ENCODE measurements at regions of chr19 and their contacts with region 1.

Region 1: DNA sequence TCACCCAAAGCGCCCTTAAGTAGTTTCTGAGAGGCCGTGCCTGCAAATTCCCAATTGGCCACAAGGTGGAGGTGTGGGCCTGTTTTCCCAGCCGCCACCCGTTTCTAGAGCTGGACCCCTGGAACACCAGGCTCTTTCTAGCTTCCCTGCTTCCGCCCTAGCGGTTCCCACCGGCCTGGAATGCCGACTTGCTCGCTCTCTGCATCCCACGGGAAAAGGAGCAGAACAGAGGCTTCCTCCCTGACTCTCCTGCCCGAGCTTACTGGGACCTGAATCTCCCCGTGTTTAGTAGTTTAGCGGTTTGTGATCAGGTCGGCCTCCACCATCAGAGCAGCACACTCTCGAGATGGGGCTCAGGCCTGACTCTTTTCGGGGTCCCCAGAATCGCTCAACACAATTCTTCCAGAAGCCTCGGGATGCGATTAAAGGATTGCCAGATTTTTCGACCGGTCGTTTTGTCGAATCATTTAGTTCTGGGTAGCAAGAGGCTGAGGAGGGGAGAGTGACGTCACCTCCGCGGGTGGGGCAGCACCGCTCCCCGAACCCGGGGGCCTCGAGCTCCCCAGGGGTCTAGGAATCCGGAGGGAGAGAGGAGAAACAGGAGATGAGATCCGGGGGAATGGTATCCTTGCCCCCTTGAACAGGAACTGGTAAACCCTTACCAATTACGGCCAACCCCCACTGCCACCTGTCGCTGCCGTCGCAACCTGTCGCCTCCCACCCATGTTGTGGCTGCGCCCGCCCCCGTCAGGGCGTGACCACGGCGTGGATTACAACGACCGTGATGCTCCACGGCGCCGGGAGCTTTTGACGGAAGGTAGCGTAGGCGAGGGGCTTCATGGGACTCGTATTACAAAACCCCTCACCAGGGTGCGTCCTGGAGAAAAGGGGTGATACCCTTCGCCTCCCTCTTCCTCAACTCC is 8.0 kb downstream of the NAPSA start:
- DNase-seq: peak; percentile 96
- H3K4me3 Mint-ChIP-seq: peak overlapping the region; percentile 90
- H3K27ac Mint-ChIP-seq: peak overlapping the region; percentile 95
- H3K4me1 Mint-ChIP-seq: peaks cover 47% of the 10 kb centered on the region
- H3K27me3 Mint-ChIP-seq: no peaks in the 10 kb centered on the region

Region 2: DNA sequence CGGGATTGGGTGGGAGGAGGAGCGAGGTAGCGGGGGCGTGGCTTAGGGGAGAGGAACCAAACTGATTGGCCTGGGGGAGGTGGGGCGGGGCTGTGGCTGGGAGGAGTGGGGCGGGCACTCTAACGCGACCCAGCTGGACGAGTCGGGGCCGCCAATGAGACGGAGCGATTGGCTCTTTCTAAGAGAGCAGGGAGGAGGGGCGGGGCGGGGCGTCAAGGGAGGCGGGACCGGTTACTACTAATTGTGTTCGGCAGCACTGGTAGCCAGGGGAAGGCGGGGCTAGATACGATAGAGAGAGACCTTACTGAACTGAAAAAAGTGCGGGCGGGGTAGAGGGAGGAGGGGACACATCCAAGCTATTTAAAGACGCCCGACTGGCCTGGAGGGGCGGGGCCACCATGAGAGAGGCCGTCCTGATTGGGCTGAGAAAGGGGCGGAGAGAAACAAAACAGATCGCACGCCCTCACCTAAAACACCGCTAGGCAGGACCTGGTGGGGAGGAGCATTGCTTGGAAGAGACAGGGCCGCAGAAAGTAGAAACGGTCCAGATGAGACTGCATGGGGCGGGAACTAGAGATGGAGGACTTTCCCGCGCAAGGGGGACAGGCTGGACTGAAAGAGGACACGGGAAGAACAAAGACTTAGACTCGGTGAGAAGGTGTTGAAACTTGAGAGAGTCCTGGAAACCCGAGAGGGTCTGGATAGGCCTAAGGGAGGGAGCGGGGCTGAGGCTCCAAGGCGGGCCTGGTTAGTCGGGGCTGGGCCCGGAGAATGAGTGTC is 28.1 kb before region 1 on chr19 and contains the start of gene KCNC3:
- intact Hi-C with region 1: loop called (anchors 2 kb)
- DNase-seq: peak; percentile 98
- H3K4me3 Mint-ChIP-seq: peak within 1 kb of the TSS; percentile 89
- H3K27ac Mint-ChIP-seq: peak within 1 kb of the TSS; percentile 92
- H3K4me1 Mint-ChIP-seq: peaks cover 73% of the 10 kb centered on the region
- H3K27me3 Mint-ChIP-seq: peaks cover 20% of the 10 kb centered on the region
- total RNA-seq, gene KCNC3: 20.3 TPM in 2 replicates

Region 3: GRCh38 chr19:50383852-50384684 is 26.6 kb after region 1 on chr19 and contains the start of gene POLD1:
- intact Hi-C with region 1: loop called (anchors 1 kb)
- DNase-seq: peak; percentile 100
- H3K4me3 Mint-ChIP-seq: peak within 1 kb of the TSS; percentile 93
- H3K27ac Mint-ChIP-seq: peak within 1 kb of the TSS; percentile 90
- H3K4me1 Mint-ChIP-seq: peaks cover 27% of the 10 kb centered on the region
- H3K27me3 Mint-ChIP-seq: no peaks in the 10 kb centered on the region
- total RNA-seq, gene POLD1: 188 and 204 TPM in 2 replicates

Region 4: GRCh38 chr19:50431343-50432220 is 74.1 kb after region 1 on chr19:
- intact Hi-C with region 1: loop called (anchors 5 kb)
- DNase-seq: peak; percentile 98
- H3K4me3 Mint-ChIP-seq: peak overlapping the region; percentile 83
- H3K27ac Mint-ChIP-seq: peak overlapping the region; percentile 90
- H3K4me1 Mint-ChIP-seq: peaks cover 10% of the 10 kb centered on the region
- H3K27me3 Mint-ChIP-seq: peaks cover 15% of the 10 kb centered on the region

Region 5: GRCh38 chr19:50476224-50476942 is 118.9 kb after region 1 on chr19 and contains the starts of genes EMC10 and GARIN5A:
- intact Hi-C with region 1: loop called (anchors 1 kb)
- DNase-seq: peak; percentile 98
- H3K4me3 Mint-ChIP-seq: peak within 1 kb of the TSS; percentile 100
- H3K27ac Mint-ChIP-seq: peak within 1 kb of the TSS; percentile 93
- H3K4me1 Mint-ChIP-seq: peaks cover 21% of the 10 kb centered on the region
- H3K27me3 Mint-ChIP-seq: no peaks in the 10 kb centered on the region
- total RNA-seq, gene EMC10: 79.2 and 81.6 TPM in 2 replicates
- total RNA-seq, gene GARIN5A: 0.21 and 0.68 TPM in 2 replicates

Region 6: DNA sequence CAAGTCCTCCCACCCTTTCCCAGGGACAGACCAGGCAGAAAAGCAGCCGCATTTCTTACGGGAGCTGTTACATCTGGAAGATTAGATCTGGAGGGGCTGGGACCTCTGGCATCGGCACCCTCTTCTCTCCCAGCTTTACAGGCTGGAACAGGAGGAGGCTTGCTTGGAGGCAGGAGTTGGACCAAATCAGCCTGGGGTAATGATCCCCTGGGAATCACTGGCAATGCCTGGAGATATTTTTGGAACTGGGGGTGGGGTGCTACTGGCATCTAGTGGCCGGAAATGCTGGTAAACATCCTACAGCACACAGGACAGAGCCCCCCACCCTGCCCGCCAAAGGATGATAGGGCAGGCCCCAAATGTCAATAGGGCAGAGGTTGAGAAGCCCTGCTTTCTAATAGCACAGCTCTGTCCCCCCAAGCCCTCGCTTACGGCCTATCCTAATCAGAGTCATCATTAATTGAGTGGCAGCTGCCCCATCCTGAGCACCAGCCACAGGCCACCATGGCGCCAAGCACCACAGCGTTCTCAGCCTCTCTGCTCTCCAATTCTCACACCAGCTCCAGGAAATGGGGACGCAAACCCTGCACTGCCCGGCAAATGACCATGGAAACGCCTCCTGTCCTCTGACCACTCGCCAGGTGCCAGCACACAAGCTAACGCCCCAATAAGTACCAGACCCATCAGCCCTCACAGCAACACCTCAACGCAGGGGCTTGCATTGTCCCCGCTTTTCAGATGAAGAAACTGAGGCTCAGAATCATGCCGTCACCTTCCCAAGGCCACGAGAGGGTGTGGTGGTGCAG is 190.1 kb after region 1 on chr19:
- intact Hi-C with region 1: no loop called
- DNase-seq: no peak
- H3K4me3 Mint-ChIP-seq: no peak overlapping the region
- H3K27ac Mint-ChIP-seq: no peak overlapping the region
- H3K4me1 Mint-ChIP-seq: no peaks in the 10 kb centered on the region
- H3K27me3 Mint-ChIP-seq: peaks cover 18% of the 10 kb centered on the region